ENCODE measurements at regions of chr18 and their contacts with region 1.

Region 1: DNA sequence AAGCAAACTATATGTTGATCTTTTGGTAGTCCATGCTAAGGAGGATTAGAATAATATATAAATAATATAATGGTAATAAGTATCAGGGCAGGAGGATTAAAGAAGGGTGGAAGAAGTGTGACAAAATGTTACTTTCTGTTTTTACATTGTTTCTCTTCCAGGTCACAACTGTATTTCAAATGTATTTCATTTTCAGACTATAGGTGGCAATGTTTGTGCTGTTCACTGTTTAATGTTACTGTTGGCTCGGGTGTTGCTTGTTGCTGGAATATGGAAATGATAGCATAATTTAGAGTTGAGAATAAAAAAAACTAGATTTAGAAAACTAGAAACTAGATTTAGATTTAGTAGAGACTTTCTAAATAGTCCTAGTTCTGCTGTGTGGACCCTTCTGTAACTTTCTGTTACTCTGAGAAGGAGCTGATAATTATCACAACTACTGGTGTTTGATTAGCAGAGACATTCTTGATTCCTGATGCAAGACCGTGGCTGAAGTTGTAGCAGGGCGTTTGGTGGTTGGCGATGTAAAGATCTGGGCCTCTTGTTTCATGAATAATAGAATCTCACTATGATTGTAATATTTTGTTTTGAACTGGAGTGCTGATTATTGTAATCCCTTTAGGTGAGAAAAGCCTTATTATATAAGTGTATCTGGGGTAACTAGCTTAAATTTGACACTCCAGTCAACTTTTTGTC is 7.9 kb downstream of the NEDD4L start:
- DNase-seq: no peak
- ATAC-seq: no peak
- H3K4me3 ChIP-seq: no peak overlapping the region
- H3K27ac ChIP-seq: no peak overlapping the region
- H3K4me1 ChIP-seq: peaks cover 0 to 6% (median 0%) of the 10 kb centered on the region in 9 donors
- H3K27me3 ChIP-seq: no peaks in the 10 kb centered on the region
- CTCF ChIP-seq: peak in 6 of 9 donors; percentile 10 to 47 (median 32)

Region 2: DNA sequence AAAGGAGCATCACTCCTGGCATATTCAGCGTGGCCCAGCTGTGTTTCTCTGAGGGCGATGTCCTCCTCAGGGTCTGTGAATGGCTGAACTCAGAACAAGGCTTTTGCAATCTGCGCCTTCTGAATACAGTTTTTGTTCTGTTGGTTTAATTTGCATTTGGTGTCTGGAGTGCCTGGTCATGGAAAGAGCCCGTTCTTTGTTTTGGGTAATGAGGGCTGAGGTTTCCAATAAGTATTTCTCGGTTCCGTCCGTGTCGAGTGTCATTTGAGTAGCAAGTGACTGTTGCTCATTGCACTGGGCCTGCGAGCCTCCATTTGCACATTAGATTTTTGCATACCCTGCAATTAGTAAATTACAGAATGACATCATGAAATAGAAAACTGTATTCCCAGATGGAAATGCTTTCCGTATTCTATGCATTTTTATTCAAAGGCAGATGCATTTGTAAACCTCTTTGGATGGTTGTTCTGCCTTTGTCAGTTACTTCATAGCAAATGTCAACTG is 49.4 kb after region 1 on chr18:
- intact Hi-C with region 1: loop called in 1 of 10 experiments (anchors 5 kb)
- DNase-seq: no peak
- ATAC-seq: no peak
- H3K4me3 ChIP-seq: no peak overlapping the region
- H3K27ac ChIP-seq: no peak overlapping the region
- H3K4me1 ChIP-seq: peaks cover 0 to 16% (median 4%) of the 10 kb centered on the region in 9 donors
- H3K27me3 ChIP-seq: no peaks in the 10 kb centered on the region
- CTCF ChIP-seq: no peak

Region 3: DNA sequence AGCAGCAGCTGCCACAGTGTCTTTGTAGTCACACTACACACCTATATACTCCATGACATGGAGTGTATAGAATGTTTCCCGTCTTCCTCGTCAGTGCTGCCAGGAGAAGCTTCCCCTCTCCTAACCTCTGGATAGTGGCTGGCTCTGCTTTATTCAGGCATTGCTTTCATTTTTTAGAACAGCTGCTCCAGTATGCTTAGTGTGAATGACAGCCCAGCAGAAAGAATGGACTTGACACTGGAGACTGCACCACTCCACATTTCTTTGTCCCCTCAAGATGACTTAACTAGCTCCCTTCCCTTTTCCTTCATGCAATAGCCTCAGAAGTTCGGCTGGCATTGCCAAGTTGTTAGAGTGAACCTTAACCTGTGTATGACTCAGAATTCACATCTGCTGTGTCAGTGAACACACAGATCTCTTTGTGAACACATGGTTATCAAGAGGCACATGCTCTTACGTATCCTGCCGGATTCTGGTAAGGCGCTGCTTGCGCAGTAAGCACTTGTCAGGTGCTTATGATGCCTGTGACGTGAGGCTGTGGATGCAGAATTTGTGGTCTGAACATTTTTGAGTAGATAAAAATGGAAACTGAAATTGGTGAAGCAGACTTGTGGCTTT is 66.0 kb after region 1 on chr18:
- intact Hi-C with region 1: loop called in 4 of 10 experiments (anchors 2 to 5 kb)
- DNase-seq: no peak
- ATAC-seq: peak in 7 of 8 donors; percentile 25 to 66 (median 55)
- H3K4me3 ChIP-seq: no peak overlapping the region
- H3K27ac ChIP-seq: no peak overlapping the region
- H3K4me1 ChIP-seq: peaks cover 0 to 8% (median 0%) of the 10 kb centered on the region in 9 donors
- H3K27me3 ChIP-seq: no peaks in the 10 kb centered on the region
- CTCF ChIP-seq: no peak